ENCODE measurements at regions of chr10 and their contacts with region 1.

Region 1: GRCh38 chr10:99520040-99520846 is 12.5 kb upstream of the NKX2-3 start:
- DNase-seq: no peak
- ATAC-seq: no peak
- H3K4me3 Mint-ChIP-seq: peak overlapping the region; percentile 57
- H3K27ac Mint-ChIP-seq: no peak overlapping the region
- H3K4me1 Mint-ChIP-seq: peaks cover 49% of the 10 kb centered on the region
- H3K27me3 Mint-ChIP-seq: peaks cover 99% of the 10 kb centered on the region
- CTCF ChIP-seq: no peak

Region 2: GRCh38 chr10:99484603-99485581 is 35.4 kb before region 1 on chr10:
- CTCF ChIA-PET with region 1: interaction called, 10 read pairs
- POLR2A ChIA-PET with region 1: no interaction called
- DNase-seq: peak; percentile 50
- ATAC-seq: peak; percentile 82
- H3K4me3 Mint-ChIP-seq: no peak overlapping the region
- H3K27ac Mint-ChIP-seq: no peak overlapping the region
- H3K4me1 Mint-ChIP-seq: no peaks in the 10 kb centered on the region
- H3K27me3 Mint-ChIP-seq: peaks cover 22% of the 10 kb centered on the region
- CTCF ChIP-seq: peak; percentile 44; the same call in 1 of the 2 replicates

Region 3: DNA sequence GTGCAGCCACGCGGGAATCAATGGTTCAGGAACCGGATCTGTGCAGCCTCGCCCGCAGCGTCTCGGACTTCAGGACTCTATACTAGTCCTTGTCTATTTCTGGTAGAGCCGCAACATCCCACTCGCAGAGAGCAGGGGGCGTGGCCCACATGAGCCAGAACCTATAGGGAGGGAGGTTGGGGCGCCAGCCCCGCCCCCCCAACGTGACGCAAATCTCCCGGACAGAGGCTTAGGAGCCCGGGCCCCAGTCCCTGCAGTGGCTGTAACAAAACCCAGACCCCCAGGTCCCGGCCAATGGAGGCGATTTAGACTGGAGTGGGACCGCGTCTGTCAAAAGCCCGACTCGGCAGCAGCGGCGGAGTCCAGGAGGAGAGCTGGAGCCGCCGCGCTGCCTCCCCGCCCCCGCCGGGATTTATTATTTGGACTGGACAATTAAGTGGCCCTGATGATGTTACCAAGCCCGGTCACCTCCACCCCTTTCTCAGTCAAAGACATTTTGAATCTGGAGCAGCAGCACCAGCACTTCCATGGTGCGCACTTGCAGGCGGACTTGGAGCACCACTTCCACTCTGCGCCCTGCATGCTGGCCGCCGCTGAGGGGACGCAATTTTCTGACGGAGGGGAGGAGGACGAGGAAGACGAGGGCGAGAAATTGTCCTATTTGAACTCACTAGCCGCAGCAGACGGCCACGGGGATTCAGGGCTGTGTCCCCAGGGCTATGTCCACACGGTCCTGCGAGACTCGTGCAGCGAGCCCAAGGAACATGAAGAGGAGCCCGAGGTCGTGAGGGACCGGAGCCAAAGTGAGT is 12.6 kb after region 1 on chr10 and contains the start of gene NKX2-3:
- CTCF ChIA-PET with region 1: interaction called, 17 read pairs
- POLR2A ChIA-PET with region 1: interaction called, 3 read pairs
- DNase-seq: peak; percentile 92
- ATAC-seq: peak; percentile 53
- H3K4me3 Mint-ChIP-seq: peak within 1 kb of the TSS; percentile 60
- H3K27ac Mint-ChIP-seq: no peak within 1 kb of the TSS
- H3K4me1 Mint-ChIP-seq: peaks cover 72% of the 10 kb centered on the region
- H3K27me3 Mint-ChIP-seq: peaks cover 100% of the 10 kb centered on the region
- CTCF ChIP-seq: no peak
- total RNA-seq, gene NKX2-3: not detected in 3 replicates

Region 4: GRCh38 chr10:99779335-99779734 is 259.1 kb after region 1 on chr10:
- CTCF ChIA-PET with region 1: no interaction called
- POLR2A ChIA-PET with region 1: no interaction called
- DNase-seq: no peak
- ATAC-seq: no peak
- H3K4me3 Mint-ChIP-seq: no peak overlapping the region
- H3K27ac Mint-ChIP-seq: no peak overlapping the region
- H3K4me1 Mint-ChIP-seq: peaks cover 18% of the 10 kb centered on the region
- H3K27me3 Mint-ChIP-seq: no peaks in the 10 kb centered on the region
- CTCF ChIP-seq: no peak